ENCODE measurements at regions of chr22 and their contacts with region 1.

Region 1: GRCh38 chr22:35430897-35431322 is 31.0 kb downstream of the MCM5 start:
- DNase-seq: peak; percentile 83
- ATAC-seq: peak; percentile 76
- H3K4me3 ChIP-seq: no peak overlapping the region
- H3K27ac ChIP-seq: peak overlapping the region; percentile 24; the same call in 1 of the 2 replicates
- H3K4me1 ChIP-seq: peaks cover 17% of the 10 kb centered on the region
- H3K27me3 ChIP-seq: no peaks in the 10 kb centered on the region
- CTCF ChIP-seq: peak; percentile 87

Region 2: GRCh38 chr22:35191412-35191811 is 239.5 kb before region 1 on chr22:
- CTCF ChIA-PET with region 1: no interaction called
- POLR2A ChIA-PET with region 1: no interaction called
- intact Hi-C with region 1: no loop called
- DNase-seq: peak; percentile 78
- ATAC-seq: peak; percentile 94
- H3K4me3 ChIP-seq: no peak overlapping the region
- H3K27ac ChIP-seq: no peak overlapping the region
- H3K4me1 ChIP-seq: peaks cover 13% of the 10 kb centered on the region; the same call in 1 of the 2 replicates
- H3K27me3 ChIP-seq: no peaks in the 10 kb centered on the region
- CTCF ChIP-seq: no peak

Region 3: DNA sequence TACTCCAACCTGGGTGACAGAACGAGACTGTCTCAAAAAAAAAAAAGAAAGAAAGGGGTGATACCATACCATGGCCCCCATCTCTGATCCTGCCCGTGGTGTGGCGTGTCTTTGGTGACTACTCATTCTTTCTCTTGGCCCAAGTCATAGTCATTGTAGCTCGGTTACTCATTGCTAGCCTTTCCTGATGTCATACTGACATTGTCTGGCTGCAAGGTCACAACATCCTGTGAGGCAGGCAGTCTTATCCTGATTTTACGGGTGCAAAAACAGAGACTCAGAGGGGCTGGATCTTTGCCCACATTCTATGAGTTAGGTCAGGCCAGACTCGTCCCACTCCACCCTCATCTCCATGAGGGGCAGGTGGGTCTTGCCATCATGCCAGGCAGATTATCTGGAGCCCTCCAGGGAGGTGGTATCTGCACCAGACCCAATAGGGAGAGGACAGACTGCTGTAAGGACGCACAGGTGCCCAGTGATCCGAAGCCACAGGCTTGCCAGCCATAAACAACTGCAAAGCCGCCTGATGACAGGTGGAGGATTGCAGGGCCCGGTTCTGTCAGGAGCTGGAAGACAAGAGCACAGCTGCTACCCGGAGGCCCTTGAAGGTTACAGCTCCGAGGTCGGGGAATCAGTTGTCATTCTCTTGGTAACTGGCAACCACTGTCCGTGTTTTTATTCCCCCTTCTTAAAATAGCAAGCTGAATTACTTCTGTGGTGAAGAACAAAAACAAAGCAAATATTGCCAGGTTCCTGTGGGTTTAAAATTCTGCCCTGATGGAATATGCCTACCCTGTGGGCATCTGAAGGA is 117.4 kb before region 1 on chr22:
- CTCF ChIA-PET with region 1: no interaction called
- POLR2A ChIA-PET with region 1: no interaction called
- intact Hi-C with region 1: no loop called
- DNase-seq: peak; percentile 61
- ATAC-seq: peak; percentile 38; the same call in 1 of the 2 replicates
- H3K4me3 ChIP-seq: no peak overlapping the region
- H3K27ac ChIP-seq: peak overlapping the region; percentile 74
- H3K4me1 ChIP-seq: peaks cover 30% of the 10 kb centered on the region
- H3K27me3 ChIP-seq: no peaks in the 10 kb centered on the region
- CTCF ChIP-seq: no peak

Region 4: DNA sequence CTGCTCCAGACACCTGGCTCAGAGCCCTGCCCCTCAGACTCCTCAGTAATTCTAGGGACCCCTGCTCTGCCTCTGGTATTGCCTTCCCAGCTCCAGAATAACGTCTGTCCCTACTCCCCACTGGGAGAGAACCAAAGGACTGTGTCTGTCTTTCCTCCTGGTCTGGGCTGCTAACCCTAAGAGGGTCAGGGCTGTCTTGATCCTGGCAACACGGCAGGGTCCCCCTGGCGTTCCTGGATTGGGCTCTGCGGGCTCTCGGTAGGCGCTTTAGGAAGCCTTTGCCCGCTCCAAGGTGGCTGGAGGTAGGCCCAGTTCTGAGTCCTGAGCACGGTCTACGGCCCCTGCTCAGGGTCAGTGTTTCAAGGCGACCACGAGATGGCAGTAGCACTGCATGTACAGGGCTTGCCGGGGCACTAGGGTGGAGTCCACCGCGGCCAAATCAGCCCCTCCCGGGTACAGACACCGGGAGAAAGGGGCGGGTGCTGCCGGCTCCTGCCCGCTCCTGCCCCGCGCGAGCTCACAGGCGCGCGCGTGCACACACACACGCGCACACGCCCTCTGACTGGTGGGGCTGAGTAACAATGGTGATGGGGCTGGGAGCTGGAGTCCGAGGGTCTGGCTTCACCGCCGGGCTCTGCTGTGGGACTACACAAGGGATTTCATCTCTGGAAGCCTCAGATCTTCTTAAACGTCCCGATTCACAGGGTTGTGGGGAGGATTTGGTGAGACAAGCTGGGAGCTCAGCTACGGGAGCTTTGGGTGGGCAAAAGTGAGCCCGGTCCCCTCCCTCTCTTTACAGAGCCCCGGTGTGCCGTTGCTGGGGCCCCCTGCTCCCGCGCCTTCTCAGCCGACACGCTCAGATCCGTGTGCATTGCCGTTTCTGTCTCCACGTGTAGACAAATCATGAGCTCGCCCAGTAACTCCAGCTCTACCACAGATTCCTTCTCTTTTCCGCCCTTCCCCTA is 80.1 kb before region 1 on chr22:
- CTCF ChIA-PET with region 1: interaction called, 5 read pairs
- POLR2A ChIA-PET with region 1: no interaction called
- intact Hi-C with region 1: loop called (anchors 2 kb)
- DNase-seq: peak; percentile 81
- ATAC-seq: peak; percentile 95
- H3K4me3 ChIP-seq: peak overlapping the region; percentile 70
- H3K27ac ChIP-seq: peak overlapping the region; percentile 52
- H3K4me1 ChIP-seq: peaks cover 11% of the 10 kb centered on the region
- H3K27me3 ChIP-seq: no peaks in the 10 kb centered on the region
- CTCF ChIP-seq: peak; percentile 69

Region 5: GRCh38 chr22:35582861-35583670 is 152.2 kb after region 1 on chr22:
- CTCF ChIA-PET with region 1: interaction called, 4 read pairs
- POLR2A ChIA-PET with region 1: no interaction called
- intact Hi-C with region 1: loop called (anchors 1 kb)
- DNase-seq: peak; percentile 70
- ATAC-seq: peak; percentile 85
- H3K4me3 ChIP-seq: no peak overlapping the region
- H3K27ac ChIP-seq: no peak overlapping the region
- H3K4me1 ChIP-seq: peaks cover 18% of the 10 kb centered on the region
- H3K27me3 ChIP-seq: no peaks in the 10 kb centered on the region
- CTCF ChIP-seq: peak; percentile 84

Region 6: GRCh38 chr22:35622191-35622913 is 191.4 kb after region 1 on chr22:
- CTCF ChIA-PET with region 1: no interaction called
- POLR2A ChIA-PET with region 1: no interaction called
- intact Hi-C with region 1: loop called (anchors 2 kb)
- DNase-seq: peak; percentile 92
- ATAC-seq: peak; percentile 65
- H3K4me3 ChIP-seq: peak overlapping the region; percentile 29; the same call in 1 of the 2 replicates
- H3K27ac ChIP-seq: peak overlapping the region; percentile 85
- H3K4me1 ChIP-seq: peaks cover 25% of the 10 kb centered on the region
- H3K27me3 ChIP-seq: no peaks in the 10 kb centered on the region
- CTCF ChIP-seq: no peak

Region 7: DNA sequence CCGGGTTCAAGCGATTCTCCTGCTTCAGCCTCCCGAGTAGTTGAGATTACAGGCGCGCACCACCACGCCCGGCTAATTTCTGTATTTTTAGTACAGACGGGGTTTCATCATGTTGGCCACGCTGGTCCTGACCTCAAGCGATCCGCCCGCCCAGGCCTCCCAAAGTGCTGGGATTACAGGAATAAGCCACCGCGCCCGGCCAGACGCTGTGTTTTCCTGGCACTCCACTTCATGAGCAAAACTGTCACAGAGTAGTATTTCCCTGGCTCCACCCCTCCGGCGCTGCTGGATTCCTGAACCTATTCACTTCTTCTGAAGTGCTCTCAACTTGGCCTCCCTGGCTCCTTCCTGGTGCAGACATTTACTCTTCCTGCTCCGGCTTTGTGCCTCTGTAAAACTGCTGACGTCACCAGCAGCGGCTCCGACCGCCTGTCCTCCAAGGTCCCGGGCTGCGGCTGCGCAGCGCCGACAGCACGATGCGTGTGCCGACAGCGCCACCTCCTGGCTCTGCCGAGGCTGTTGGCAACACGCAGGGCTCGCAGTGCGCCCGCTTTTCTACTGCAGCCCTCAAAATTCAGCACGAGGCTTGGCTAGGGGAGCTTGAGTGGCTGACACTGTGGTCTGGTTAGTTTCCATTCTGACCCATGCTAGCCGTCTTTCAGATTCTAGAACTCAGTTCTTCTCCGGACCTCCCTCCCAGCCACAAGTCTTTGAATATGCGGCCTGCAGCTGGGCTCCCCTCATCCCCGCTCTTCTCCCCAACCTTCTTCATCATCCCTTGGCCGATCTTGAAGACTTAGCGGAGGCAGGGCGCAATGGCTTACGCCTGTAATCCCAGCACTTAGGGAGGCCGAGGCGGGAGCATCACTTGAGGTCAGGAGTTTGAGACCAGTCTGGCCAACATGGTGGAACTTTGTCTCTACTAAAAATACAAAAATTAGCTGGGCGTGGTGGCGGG is 693.0 kb after region 1 on chr22:
- CTCF ChIA-PET with region 1: no interaction called
- POLR2A ChIA-PET with region 1: no interaction called
- intact Hi-C with region 1: loop called (anchors 5 kb)
- DNase-seq: peak; percentile 92
- ATAC-seq: peak; percentile 97
- H3K4me3 ChIP-seq: peak overlapping the region; percentile 43; the same call in 1 of the 2 replicates
- H3K27ac ChIP-seq: 0 out of 2 replicates have a peak overlapping the region, but pooled peaks have one; percentile 32
- H3K4me1 ChIP-seq: peaks cover 4% of the 10 kb centered on the region; the same call in 1 of the 2 replicates
- H3K27me3 ChIP-seq: no peaks in the 10 kb centered on the region
- CTCF ChIP-seq: peak; percentile 91

Measured in PC-3 (cell line).